ENCODE measurements at regions of chr19 and their contacts with region 1.

Region 1: DNA sequence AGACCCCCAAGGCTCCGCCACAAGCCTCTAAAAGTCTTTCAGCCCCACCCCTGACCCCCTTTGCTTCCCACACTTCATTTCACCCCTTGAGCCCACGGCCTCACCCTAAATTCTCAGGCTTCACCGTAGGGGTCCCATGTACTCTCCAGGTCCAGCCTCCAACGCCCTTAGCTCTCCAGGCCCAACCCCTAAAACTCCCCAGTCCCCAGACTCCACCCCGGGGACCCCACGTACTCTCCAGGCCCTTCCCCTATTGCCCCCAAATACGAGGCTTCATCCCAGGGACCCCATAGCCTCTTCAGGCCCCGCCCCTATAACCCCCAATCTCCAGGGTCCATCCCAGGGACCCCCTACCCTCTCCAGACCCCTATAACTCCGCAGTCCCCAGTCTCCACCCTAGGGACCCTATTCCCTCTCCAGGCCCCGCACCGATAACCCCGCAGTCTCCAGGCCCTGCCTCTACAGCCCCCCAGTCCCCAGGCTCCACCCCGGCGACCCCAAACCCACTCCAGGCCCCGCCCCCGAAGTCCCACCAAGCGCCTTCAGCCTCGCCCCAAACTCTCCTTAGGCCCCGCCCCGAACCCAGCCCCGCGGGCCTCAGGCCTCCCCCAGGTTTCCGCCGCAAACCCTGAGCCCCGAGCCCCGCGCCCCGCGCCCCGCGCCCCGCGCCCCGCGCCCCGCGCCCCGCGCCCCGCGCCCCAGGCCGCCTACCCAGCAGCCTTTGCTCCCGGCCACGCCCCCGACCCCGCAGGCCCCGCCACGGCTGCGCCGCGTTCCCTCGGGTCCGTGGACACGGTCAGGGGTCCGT is 540 bp downstream of the MED16 start:
- DNase-seq: peak; percentile 36
- H3K4me3 ChIP-seq: peak overlapping the region; percentile 91
- H3K27ac ChIP-seq: peak overlapping the region; percentile 43
- H3K4me1 ChIP-seq: peaks cover 5% of the 10 kb centered on the region
- CTCF ChIP-seq: no peak

Region 2: DNA sequence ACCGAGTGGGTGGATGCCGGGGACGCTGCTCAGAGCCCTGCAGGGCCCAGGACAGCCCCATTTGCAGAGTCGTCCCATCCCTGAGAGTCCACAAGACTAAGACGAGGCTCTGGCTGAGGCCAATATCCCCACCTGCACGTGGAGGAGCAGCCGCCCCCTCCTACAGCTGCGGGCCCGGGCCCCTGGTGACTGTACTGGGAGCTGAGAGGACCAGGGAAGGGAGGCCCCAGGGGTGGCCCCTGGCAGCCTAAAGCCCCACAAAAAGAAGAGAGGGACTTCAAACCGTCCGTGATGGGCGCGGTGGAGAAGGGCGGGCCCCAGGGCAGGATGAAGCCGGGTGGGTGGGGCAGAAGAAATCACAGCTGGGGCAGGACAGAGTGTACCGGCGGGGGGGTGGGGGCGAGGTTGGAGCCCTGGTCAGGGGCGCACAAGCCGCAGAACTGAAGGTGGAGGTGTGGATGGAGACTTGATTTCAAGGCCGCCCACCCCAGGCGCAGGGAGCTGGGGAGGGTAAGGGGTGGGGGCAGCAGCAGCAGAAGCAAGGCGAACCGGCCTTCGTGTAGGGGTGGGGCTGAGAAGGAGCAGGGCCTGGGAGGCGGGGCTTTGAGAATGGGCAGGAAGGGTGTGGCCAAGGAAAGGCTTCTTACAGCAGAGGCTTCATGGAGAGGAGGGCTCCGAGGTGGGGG is 20.0 kb before region 1 on chr19:
- CTCF ChIA-PET with region 1: no interaction called
- POLR2A ChIA-PET with region 1: no interaction called
- intact Hi-C with region 1: loop called (anchors 2 kb)
- DNase-seq: peak; percentile 93
- H3K4me3 ChIP-seq: peak overlapping the region; percentile 47
- H3K27ac ChIP-seq: peak overlapping the region; percentile 63
- H3K4me1 ChIP-seq: peaks cover 9% of the 10 kb centered on the region
- CTCF ChIP-seq: no peak

Region 3: GRCh38 chr19:907183-907853 is 14.9 kb after region 1 on chr19:
- CTCF ChIA-PET with region 1: no interaction called
- POLR2A ChIA-PET with region 1: interaction called, 3 read pairs
- intact Hi-C with region 1: loop called (anchors 2 kb)
- DNase-seq: peak; percentile 59
- H3K4me3 ChIP-seq: no peak overlapping the region
- H3K27ac ChIP-seq: peak overlapping the region; percentile 95
- H3K4me1 ChIP-seq: peaks cover 47% of the 10 kb centered on the region
- CTCF ChIP-seq: no peak

Measured in OCI-LY7 (cell line).